ENCODE measurements at regions of chr6 and their contacts with region 1.

Region 1: DNA sequence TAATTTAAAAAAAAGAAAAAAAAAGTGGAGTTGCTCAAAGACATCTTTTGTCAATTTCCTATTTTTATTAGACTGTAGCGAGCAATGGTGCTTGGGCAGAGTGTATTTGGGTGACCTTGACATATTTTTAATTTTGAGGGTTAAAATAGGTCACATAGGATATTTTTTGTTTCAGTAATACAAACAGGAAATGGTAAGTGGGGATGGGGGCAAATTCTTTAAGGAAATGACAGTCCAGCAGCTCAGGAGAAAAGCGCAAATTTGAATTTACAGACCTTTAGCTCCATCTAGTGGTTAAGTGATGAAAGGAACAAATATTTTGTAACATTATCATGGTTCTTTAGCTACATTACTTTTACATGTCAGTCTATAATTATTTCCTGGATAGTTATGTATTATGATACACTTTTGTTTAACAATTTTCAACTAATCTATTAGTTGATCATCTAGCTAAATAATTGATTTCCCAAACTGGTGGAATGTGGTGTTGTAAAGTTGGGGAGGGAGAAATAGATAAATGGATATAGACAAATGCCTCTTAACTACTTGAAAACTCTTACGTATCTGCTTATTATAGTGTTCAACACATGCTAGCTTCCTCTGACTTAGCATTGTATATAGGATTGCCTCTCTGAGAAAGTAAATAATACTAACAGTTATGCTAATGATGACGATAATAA is 10.0 kb downstream of the CITED2 start:
- DNase-seq: peak; percentile 68
- H3K4me3 Mint-ChIP-seq: no peak overlapping the region
- H3K27ac Mint-ChIP-seq: no peak overlapping the region
- H3K4me1 Mint-ChIP-seq: peaks cover 30% of the 10 kb centered on the region
- H3K27me3 Mint-ChIP-seq: peaks cover 4% of the 10 kb centered on the region

Region 2: GRCh38 chr6:139219271-139219729 is 145.1 kb before region 1 on chr6:
- intact Hi-C with region 1: loop called (anchors 1 kb)
- DNase-seq: peak; percentile 90
- H3K4me3 Mint-ChIP-seq: peak overlapping the region; percentile 52
- H3K27ac Mint-ChIP-seq: peak overlapping the region; percentile 82
- H3K4me1 Mint-ChIP-seq: peaks cover 10% of the 10 kb centered on the region
- H3K27me3 Mint-ChIP-seq: no peaks in the 10 kb centered on the region

Region 3: DNA sequence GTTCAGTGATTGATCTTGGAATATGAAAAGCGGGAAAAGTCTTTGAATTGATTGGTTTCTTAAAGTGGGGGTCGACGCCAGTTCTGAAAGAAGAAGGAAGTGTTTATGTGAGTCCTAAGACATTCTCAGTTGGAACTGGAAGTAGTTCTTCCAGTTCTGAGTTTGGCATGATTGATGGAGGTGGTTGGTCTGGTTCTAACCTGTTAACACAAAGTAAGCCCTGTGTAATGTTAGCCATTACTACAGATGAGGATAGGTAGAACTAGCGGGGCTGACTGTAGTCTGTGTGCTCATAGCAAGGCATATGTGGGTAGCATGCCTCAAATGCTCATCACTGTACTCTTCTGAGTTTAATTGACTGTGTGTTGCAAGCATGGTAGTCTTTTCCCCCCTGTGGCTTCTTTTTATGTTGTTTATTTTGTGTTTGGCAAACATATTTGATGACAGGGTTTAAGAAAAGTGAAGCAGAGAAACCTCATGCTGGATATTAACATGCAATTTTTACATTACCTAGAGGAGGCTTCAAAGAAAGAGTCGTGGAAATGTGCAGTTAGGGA is 14.9 kb before region 1 on chr6:
- intact Hi-C with region 1: no loop called
- DNase-seq: no peak
- H3K4me3 Mint-ChIP-seq: no peak overlapping the region
- H3K27ac Mint-ChIP-seq: no peak overlapping the region
- H3K4me1 Mint-ChIP-seq: no peaks in the 10 kb centered on the region
- H3K27me3 Mint-ChIP-seq: no peaks in the 10 kb centered on the region